Mammary epithelial cell (primary cell): ENCODE measurements at regions of chr1 and their contacts with region 1.

Region 1: DNA sequence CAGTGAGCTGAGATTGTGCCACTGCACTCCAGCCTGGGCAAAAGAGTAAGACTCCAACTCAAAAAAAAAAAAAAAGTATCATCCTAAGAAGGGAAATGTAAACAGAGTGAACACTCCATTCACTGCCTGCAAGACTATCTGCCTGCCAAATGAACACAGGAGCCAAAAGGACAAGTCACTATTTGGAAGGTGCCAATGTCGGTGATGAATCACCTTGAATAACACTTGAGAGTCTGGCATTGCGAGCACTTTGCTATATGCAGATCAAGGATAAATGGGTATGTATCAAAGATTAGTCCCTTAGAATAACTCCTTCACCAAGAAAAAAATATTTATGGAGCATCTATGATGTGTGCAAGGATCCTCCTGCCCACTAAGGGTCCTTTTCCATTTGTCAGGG is 6.6 kb downstream of the UBR4 start:
- DNase-seq: peak; percentile 75
- H3K4me3 ChIP-seq: no peak overlapping the region
- H3K27ac ChIP-seq: no peak overlapping the region
- H3K4me1 ChIP-seq: peaks cover 18% of the 10 kb centered on the region
- H3K27me3 ChIP-seq: no peaks in the 10 kb centered on the region
- CTCF ChIP-seq: no peak

Region 2: DNA sequence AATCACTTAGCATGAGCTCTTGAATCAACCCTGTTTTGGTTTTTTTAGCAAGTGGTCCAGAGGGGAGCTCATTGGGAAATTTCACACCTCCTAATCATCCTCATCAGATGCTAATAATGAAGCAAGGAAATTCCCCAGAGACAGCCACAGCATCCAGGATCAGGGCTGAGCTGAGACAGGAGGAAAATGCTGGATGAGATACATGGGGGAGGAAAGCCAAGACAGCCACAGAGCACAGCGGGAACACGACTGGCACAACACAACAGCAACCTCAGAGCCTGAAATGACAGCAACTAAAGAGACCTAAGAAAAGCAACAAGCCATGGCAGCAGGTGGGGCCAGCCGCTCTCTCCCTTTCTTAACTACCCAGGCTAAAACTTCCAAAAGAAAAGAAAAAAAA is 63.7 kb before region 1 on chr1:
- CTCF ChIA-PET with region 1: no interaction called
- dilution Hi-C with region 1: no loop called
- in situ Hi-C with region 1: no loop called
- intact Hi-C with region 1: loop called (anchors 10 kb)
- DNase-seq: no peak
- H3K4me3 ChIP-seq: no peak overlapping the region
- H3K27ac ChIP-seq: no peak overlapping the region
- H3K4me1 ChIP-seq: no peaks in the 10 kb centered on the region
- H3K27me3 ChIP-seq: no peaks in the 10 kb centered on the region
- CTCF ChIP-seq: no peak

Region 3: GRCh38 chr1:19222979-19223824 is 19.8 kb after region 1 on chr1:
- CTCF ChIA-PET with region 1: no interaction called
- dilution Hi-C with region 1: no loop called
- in situ Hi-C with region 1: no loop called
- intact Hi-C with region 1: no loop called
- DNase-seq: peak; percentile 64
- H3K4me3 ChIP-seq: no peak overlapping the region
- H3K27ac ChIP-seq: no peak overlapping the region
- H3K4me1 ChIP-seq: no peaks in the 10 kb centered on the region
- H3K27me3 ChIP-seq: no peaks in the 10 kb centered on the region
- CTCF ChIP-seq: no peak